ENCODE measurements at regions of chr11 and their contacts with region 1.

Region 1: DNA sequence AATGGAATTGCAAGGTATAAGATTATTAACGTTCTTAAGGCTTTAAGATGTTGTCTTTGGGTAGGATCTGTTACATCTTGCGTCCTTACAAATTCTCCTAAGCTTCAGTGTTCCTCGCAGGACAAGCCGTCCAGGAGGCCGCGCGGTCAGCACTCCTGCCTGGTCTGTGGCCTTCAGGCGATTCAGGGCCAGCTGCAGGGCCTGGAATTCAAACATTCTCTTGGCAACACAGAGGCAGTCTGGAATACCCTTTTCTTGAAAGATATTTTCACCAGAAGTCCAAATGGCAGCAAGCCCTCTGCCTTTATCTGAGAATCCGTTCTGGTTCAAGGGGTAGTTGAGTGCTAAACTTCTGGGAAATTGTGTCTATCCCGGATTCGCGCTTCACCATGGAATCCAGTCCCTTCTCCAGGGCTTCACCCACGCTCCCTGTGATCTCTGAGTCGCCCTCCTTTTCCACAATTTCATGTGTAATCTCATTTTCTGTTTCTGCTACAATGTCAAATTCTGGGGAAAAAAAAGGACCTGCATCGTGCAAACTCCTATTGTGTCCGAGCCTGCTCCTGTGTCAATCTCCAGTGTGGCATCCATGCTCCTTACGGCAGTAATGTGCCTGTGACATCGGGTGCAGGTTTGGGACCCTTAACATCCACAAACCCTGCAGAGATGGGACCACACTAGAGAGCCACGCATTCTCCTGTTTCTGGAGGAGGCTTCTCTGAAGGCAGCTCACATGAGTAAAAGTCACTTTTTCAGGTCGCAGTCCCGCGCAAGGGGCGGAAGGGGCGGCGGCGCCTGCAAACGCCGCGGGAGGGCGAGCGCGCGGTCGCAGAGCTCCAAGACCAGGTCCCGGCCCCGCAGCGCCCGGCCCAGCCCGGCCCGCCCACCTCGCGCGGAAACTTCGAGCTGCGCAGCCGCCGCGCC is 25.4 kb upstream of the SORL1 start:
- DNase-seq: peak; percentile 83

Region 2: DNA sequence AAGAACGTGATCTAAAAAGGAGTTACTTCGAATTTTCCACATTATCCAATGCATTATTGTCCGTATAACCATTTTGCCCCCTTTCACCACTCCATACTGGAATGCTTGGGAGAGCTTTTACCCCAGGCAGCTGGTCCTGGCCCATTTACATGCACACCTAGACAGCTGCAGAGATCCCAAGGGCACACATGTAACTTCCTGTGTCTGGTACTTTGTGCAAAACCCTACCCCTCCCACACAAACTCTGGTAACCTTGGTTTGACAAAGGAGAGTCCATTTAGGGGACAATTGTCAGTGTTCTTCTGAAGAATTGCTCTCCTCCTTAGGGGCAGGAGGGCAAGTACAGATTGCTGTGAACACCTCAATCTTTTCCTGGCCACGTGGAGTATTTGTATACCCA is 32.0 kb before region 1 on chr11:
- intact Hi-C with region 1: loop called in 1 of 2 experiments (anchors 1 kb)
- DNase-seq: no peak